ENCODE measurements at regions of chr3 and their contacts with region 1.

Region 1: GRCh38 chr3:189570916-189571315 is 60.3 kb upstream of the TP63 start:
- DNase-seq: no peak
- H3K4me3 Mint-ChIP-seq: no peak overlapping the region
- H3K27ac Mint-ChIP-seq: no peak overlapping the region
- H3K4me1 Mint-ChIP-seq: peaks cover 16% of the 10 kb centered on the region
- H3K27me3 Mint-ChIP-seq: peaks cover 1% of the 10 kb centered on the region

Region 2: DNA sequence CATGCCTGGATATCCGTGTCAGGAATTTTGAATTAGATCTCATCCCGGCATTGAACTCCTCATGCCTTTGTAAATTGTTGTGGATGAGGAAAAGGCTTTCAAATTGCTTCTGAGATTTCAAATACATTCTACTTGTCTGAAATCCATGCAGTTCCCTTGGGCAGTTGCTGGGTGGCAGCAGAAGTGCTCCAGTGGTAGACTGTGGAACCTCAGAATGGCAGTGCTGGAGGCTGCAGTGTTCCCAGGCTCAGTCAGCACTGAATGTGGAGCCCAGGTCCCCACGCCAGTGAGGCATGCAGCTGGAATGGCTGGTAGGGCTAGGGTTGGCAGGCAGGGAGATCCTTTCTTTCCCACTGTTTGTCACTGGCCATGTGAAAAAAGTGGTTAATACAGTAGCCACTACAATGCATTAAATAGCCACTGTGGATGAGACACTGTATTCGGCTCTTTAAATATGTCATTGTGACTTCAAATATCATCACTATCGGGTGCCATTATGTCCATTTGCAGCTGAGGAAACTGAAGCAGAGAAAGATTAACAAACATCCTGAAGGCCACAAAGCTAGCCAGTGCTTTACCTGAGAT is 300.6 kb before region 1 on chr3:
- CTCF ChIA-PET with region 1: no interaction called
- POLR2A ChIA-PET with region 1: no interaction called
- intact Hi-C with region 1: loop called (anchors 5 kb)
- DNase-seq: peak; percentile 58
- H3K4me3 Mint-ChIP-seq: no peak overlapping the region
- H3K27ac Mint-ChIP-seq: no peak overlapping the region
- H3K4me1 Mint-ChIP-seq: peaks cover 13% of the 10 kb centered on the region
- H3K27me3 Mint-ChIP-seq: no peaks in the 10 kb centered on the region

Region 3: DNA sequence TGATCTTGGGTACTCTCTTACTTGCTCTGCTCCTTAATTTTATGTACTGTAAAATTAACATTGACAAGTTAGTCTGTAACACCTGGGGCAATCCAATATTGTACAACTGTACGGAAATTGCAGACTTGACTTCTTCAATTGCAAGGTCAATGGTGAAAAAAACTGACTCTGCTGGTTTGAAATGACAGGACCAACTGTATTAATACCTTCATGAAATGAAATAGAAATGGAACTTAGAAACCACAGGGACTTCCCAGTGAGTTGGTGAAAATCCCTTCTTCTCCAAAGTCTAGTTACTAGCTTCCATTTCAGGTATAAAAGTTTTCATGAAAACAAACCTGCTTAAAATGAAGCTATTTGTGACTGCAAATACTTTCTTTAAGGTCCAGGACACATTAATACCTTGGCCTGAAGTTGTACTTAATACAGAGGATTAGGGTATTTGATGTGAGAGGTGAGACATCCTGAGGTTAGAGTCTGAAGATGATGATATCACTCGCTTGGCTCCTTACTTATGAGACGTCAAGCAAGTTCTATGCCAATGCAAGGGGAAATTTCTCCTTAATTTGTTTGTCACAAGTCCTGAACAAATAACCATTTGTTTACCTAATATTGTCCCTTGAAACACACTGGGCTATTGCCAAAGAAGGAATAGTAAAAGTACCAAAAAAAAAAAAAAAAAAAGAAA is 166.0 kb before region 1 on chr3:
- CTCF ChIA-PET with region 1: no interaction called
- POLR2A ChIA-PET with region 1: no interaction called
- intact Hi-C with region 1: no loop called
- DNase-seq: no peak
- H3K4me3 Mint-ChIP-seq: no peak overlapping the region
- H3K27ac Mint-ChIP-seq: no peak overlapping the region
- H3K4me1 Mint-ChIP-seq: peaks cover 9% of the 10 kb centered on the region
- H3K27me3 Mint-ChIP-seq: peaks cover 1% of the 10 kb centered on the region

Region 4: DNA sequence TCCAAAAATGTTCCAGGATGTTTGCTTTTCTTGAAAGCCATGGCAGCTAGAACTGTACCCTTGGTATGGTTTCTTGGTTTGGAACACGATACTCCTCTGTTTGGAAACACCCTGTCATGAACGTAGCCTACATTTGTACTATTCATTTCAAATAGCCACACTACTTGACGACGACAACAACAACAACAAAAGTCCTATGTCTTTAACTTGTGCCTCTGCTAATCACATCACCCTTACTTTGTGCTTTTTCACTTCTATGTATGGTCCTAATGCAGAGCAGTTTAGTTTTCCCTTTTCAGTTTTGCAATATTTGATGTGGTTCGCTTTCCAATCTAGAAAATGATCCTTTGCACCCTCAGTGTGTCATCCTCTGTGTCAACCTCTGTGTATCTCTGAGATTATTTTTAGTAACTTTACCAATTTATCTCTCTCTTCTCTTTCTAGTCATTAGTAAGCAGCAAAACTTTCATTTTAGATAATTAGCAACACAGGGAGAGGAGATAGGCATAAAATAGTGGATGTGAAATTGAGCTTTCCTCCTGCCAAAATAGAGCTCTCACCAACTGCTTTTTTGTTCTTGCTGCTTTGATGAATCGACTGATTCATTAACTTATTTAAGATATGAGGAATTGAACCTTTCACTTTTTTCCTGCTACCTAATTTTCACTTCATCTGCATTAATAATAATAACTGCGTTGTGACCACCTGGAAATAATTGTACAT is 16.2 kb after region 1 on chr3:
- CTCF ChIA-PET with region 1: no interaction called
- POLR2A ChIA-PET with region 1: no interaction called
- intact Hi-C with region 1: loop called (anchors 2 kb)
- DNase-seq: no peak
- H3K4me3 Mint-ChIP-seq: no peak overlapping the region
- H3K27ac Mint-ChIP-seq: no peak overlapping the region
- H3K4me1 Mint-ChIP-seq: peaks cover 13% of the 10 kb centered on the region
- H3K27me3 Mint-ChIP-seq: peaks cover 7% of the 10 kb centered on the region

Region 5: DNA sequence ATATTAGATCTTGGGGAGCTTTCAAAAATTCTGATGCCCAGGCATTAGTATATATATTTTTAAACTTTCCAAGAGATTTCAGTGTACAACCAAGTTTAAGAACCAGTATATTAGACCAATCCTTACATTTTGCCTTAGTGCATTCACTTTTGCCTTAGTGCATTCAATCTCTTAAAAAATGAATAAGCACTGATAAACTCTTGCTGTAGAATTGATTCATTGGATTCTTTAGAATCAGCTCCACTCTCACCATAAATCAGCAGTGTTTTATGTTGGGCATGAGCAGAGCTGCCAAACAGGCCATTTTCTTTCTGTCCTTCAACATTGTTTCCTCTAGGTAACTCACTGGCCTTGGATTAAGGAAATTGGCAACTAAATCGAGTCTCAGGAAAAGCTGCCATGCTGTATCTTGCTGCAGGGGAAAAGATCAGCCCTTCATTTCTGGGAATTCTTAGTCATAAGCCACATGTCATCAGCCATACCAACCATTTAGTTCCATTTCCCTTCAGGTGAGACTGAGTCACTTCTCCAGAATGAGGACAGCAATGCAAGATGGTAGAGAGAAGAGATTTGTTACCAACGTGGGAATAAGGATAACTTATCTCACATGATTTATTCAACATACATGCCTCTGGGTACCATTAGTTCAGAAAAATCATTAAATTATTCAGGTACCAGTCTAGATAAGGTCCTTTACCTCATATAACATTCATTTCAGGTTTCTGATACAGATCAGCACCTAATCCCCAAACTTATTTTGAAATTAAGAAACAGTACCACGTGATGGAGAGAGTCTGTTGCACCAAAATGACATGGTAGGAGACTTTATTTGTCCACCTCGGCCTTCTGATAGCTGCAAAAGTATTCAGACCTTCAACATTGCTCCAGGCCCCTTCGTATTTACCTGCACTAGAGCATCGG is 357.3 kb after region 1 on chr3:
- CTCF ChIA-PET with region 1: no interaction called
- POLR2A ChIA-PET with region 1: no interaction called
- intact Hi-C with region 1: loop called (anchors 10 kb)
- DNase-seq: peak; percentile 14
- H3K4me3 Mint-ChIP-seq: no peak overlapping the region
- H3K27ac Mint-ChIP-seq: peak overlapping the region; percentile 19
- H3K4me1 Mint-ChIP-seq: peaks cover 22% of the 10 kb centered on the region
- H3K27me3 Mint-ChIP-seq: peaks cover 2% of the 10 kb centered on the region

Measured in activated CD4-positive, alpha-beta memory T cell treated with anti-CD3 and anti-CD28 coated beads for 36 hours (primary cell).